Right ventricle myocardium superior (tissue), 1 donor: ENCODE measurements at regions of chr5 and their contacts with region 1.

Region 1: GRCh38 chr5:179023528-179024430 is at the start of gene ZNF879:
- DNase-seq: peak; percentile 97
- ATAC-seq: peak; percentile 100
- total RNA-seq, gene ZNF879: 4.0 TPM

Region 2: DNA sequence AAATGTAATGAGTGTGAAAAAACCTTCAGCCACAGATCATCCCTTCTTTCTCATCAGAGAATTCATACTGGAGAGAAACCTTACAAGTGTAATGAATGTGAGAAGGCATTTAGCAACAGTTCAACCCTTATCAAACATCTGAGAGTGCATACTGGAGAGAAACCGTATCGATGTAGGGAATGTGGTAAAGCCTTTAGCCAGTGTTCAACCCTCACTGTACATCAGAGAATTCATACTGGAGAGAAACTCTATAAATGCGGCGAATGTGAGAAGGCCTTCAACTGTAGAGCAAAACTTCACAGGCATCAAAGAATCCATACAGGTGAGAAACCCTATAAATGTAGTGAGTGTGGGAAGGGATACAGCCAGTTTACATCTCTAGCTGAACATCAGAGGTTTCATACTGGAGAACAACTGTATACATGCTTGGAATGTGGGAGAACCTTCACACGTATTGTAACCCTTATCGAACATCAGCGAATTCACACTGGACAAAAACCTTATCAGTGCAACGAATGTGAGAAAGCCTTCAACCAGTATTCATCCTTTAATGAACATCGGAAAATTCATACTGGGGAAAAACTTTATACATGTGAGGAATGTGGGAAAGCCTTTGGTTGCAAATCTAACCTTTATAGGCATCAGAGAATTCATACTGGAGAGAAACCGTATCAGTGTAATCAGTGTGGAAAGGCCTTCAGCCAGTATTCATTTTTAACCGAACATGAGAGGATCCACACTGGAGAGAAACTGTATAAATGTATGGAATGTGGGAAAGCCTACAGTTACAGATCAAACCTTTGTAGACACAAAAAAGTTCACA is 55.6 kb after region 1 on chr5:
- intact Hi-C with region 1: loop called (anchors 10 kb)
- DNase-seq: no peak
- ATAC-seq: no peak